Activated naive CD4-positive, alpha-beta T cell treated with anti-CD3 and anti-CD28 coated beads for 36 hours (primary cell): ENCODE measurements at regions of chr2 and their contacts with region 1.

Region 1: GRCh38 chr2:212912445-212913103 is 238.8 kb downstream of the IKZF2 start:
- DNase-seq: no peak
- H3K4me3 Mint-ChIP-seq: no peak overlapping the region
- H3K27ac Mint-ChIP-seq: no peak overlapping the region
- H3K4me1 Mint-ChIP-seq: peaks cover 16% of the 10 kb centered on the region
- H3K27me3 Mint-ChIP-seq: peaks cover 2% of the 10 kb centered on the region

Region 2: DNA sequence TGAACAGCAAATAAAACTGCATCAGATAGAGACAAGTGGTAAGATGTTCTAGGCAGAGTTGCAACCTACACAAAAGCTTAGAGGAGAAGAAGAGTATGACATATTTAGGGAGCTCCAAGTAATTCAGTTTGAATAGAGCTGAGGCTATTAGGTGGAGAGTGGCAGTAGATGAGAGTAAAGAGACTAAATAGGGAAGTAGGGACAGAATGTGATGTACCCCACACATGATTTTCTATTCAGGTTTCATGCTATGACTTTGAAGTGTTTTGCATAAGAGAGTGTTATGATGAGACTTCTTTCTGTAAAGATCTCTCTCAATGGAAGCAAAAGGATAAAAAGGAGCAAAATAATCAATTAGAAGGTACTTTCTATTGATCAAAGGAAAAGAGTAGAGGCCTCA is 167.2 kb before region 1 on chr2:
- CTCF ChIA-PET with region 1: no interaction called
- intact Hi-C with region 1: no loop called
- DNase-seq: no peak
- H3K4me3 Mint-ChIP-seq: no peak overlapping the region
- H3K27ac Mint-ChIP-seq: no peak overlapping the region
- H3K4me1 Mint-ChIP-seq: no peaks in the 10 kb centered on the region
- H3K27me3 Mint-ChIP-seq: no peaks in the 10 kb centered on the region

Region 3: DNA sequence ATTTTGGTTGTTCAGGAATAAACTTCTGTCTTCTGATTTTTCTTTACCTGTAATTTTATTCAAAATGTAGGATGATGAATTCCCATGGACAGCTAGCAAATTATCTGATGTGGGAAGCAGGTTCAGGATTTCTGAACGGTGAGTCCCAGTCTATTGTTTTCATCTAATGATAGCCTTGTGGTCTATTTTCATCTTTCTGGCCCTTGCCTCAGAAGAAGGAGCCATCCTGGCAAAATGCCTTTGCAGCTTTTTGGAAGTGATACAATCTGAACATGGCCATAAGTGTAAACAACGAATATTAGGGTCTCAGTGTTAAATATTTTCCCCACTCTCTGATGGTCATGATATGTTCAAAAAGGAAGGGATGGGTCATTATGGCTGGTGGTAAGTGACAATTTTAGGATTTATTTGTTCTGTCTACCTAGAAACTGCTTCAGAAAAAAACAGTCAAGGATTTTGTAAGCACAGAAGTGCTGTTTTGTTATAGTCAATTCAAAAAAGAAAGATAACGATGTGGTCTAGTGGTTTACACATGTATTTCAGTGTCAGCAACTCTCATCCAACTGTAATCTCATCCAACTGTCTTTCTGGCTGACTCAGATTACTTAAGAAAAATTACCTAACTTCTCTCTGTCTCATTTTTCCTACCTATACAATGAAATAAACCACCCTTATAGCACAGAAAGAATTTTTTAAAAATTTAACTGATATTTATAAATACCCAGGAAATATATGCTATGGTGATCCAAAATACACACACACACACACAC is 101.4 kb before region 1 on chr2:
- CTCF ChIA-PET with region 1: no interaction called
- intact Hi-C with region 1: loop called (anchors 5 kb)
- DNase-seq: no peak
- H3K4me3 Mint-ChIP-seq: no peak overlapping the region
- H3K27ac Mint-ChIP-seq: no peak overlapping the region
- H3K4me1 Mint-ChIP-seq: peaks cover 4% of the 10 kb centered on the region
- H3K27me3 Mint-ChIP-seq: no peaks in the 10 kb centered on the region

Region 4: DNA sequence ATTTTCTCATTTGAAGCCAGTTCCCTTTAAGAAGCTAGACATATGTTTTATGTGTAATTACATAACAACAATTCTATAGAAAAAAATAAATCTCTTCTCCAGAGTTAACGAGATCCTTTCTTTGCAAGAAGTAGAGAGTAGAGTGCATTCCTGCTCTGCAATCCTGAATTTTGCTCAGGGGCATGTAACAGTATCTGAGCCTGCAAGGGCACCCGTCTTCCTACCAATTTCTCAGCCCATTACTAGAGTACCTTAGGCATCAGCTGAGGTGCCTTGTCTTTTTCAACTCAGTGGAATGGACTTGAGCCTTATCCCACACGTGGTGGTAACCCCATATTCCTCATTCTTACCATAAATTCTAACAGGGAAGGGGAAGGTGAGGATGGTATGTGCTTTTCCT is 33.0 kb after region 1 on chr2:
- CTCF ChIA-PET with region 1: no interaction called
- intact Hi-C with region 1: no loop called
- DNase-seq: no peak
- H3K4me3 Mint-ChIP-seq: no peak overlapping the region
- H3K27ac Mint-ChIP-seq: no peak overlapping the region
- H3K4me1 Mint-ChIP-seq: no peaks in the 10 kb centered on the region
- H3K27me3 Mint-ChIP-seq: no peaks in the 10 kb centered on the region

Region 5: GRCh38 chr2:212968280-212968679 is 55.7 kb after region 1 on chr2:
- CTCF ChIA-PET with region 1: no interaction called
- intact Hi-C with region 1: loop called (anchors 2 kb)
- DNase-seq: peak; percentile 16
- H3K4me3 Mint-ChIP-seq: no peak overlapping the region
- H3K27ac Mint-ChIP-seq: no peak overlapping the region
- H3K4me1 Mint-ChIP-seq: peaks cover 3% of the 10 kb centered on the region
- H3K27me3 Mint-ChIP-seq: peaks cover 3% of the 10 kb centered on the region

Region 6: GRCh38 chr2:213010106-213010779 is 97.7 kb after region 1 on chr2:
- CTCF ChIA-PET with region 1: no interaction called
- intact Hi-C with region 1: loop called (anchors 5 kb)
- DNase-seq: no peak
- H3K4me3 Mint-ChIP-seq: no peak overlapping the region
- H3K27ac Mint-ChIP-seq: no peak overlapping the region
- H3K4me1 Mint-ChIP-seq: peaks cover 1% of the 10 kb centered on the region
- H3K27me3 Mint-ChIP-seq: no peaks in the 10 kb centered on the region

Region 7: DNA sequence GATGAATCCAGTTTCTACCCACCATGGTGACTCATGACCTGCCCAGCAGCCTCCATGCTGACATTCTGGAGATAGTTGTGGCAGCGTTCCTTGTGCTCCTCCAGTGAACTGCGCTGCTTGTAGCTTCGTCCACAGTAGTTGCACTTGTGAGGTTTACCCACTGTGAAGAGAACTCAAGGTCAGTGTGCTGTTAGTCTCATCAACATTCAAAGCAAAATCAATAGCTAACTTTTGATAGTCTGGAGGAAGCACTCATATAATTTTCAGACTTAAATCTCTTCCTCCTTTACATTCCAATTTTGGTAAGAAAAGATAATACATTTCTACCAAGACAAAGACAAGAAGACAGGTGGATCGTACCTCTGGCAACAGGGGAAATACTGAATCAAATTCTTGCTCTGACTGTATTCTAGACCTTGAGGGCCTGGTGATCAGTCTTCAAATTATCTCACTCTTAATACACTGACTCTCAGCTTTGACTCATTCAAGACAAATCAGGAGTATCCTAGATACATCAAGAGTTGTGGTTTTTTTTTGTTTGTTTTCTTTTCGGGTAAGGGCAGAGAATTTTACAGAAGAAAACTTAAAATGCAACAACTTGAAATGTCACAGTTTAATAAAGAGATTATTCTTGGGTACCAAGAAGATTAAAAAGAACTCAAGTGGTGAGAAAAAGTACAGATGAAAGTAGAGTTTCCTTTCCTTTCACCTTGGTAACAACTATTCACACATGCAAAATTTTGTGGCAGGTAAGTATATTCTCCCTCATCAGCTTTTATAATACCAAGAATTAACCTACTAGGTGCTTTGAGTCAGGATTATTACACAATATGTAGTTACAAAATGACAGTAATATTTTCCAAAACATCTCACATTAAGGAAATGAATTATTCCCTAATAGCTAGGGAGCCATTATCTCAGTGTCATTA is 109.7 kb after region 1 on chr2:
- CTCF ChIA-PET with region 1: no interaction called
- intact Hi-C with region 1: loop called (anchors 1 kb)
- DNase-seq: peak; percentile 8
- H3K4me3 Mint-ChIP-seq: no peak overlapping the region
- H3K27ac Mint-ChIP-seq: no peak overlapping the region
- H3K4me1 Mint-ChIP-seq: peaks cover 10% of the 10 kb centered on the region
- H3K27me3 Mint-ChIP-seq: peaks cover 6% of the 10 kb centered on the region

Region 8: GRCh38 chr2:213119061-213119856 is 206.7 kb after region 1 on chr2:
- CTCF ChIA-PET with region 1: no interaction called
- intact Hi-C with region 1: loop called (anchors 1 kb)
- DNase-seq: peak; percentile 6
- H3K4me3 Mint-ChIP-seq: no peak overlapping the region
- H3K27ac Mint-ChIP-seq: peak overlapping the region; percentile 23
- H3K4me1 Mint-ChIP-seq: peaks cover 9% of the 10 kb centered on the region
- H3K27me3 Mint-ChIP-seq: peaks cover 6% of the 10 kb centered on the region